Transverse colon (tissue), 4 donors: ENCODE measurements at regions of chr2 and their contacts with region 1.

Region 1: GRCh38 chr2:85538486-85539360 is at the start of gene MAT2A:
- DNase-seq: peak; percentile 92
- H3K4me3 ChIP-seq: peak within 1 kb of the TSS; percentile 56 to 94 (median 85)
- H3K27ac ChIP-seq: peak within 1 kb of the TSS; percentile 95 to 99 (median 98)
- H3K4me1 ChIP-seq: peaks cover 17 to 65% (median 40%) of the 10 kb centered on the region in 4 donors
- H3K27me3 ChIP-seq: no peaks in the 10 kb centered on the region
- CTCF ChIP-seq: peak; percentile 63 to 96 (median 76)
- EP300 ChIP-seq: no peak
- POLR2A ChIP-seq: peak; percentile 100
- total RNA-seq, gene MAT2A: 66.2 to 185 (median 142) TPM

Region 2: DNA sequence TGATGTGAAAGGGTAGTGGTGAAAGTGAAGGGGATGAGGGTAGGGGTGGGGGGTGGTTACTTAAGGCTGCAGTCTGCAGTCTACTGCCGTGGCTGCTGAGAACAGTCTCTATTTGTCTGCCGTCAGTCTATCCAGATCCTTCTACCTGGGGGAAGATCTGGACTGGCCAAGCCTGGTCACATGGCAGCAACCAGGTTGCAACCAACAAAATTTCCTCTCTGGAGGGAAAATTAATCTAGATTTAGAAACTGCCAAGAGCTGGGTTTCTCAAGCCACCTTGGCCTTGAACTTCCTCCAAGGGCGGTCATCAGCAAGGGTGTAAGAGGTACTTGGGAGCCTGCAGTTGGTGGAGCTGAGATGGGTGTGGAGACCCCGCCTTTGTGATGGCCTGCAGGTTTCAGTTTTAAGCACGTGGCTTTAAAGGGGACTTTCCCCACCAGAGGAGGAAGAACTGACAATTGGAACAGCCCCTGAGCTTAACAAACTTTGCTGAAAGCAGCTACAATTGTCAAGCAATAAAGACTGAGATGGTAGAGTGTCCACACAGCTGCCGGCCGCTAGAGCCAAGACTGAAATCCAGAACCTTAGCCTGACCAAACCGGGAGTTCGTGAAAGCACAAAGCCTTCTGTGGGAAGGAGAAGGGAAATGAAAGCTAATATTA is 599.2 kb before region 1 on chr2:
- in situ Hi-C with region 1: no loop called
- intact Hi-C with region 1: no loop called
- DNase-seq: peak; percentile 80
- H3K4me3 ChIP-seq: peak overlapping the region in 1 of 4 donors; percentile 27
- H3K27ac ChIP-seq: peak overlapping the region; percentile 61 to 79 (median 75)
- H3K4me1 ChIP-seq: peaks cover 6 to 34% (median 16%) of the 10 kb centered on the region in 4 donors
- H3K27me3 ChIP-seq: no peaks in the 10 kb centered on the region
- CTCF ChIP-seq: peak in 2 of 5 experiments; percentile 29 to 40
- EP300 ChIP-seq: no peak
- POLR2A ChIP-seq: no peak

Region 3: GRCh38 chr2:85221067-85221691 is 317.5 kb before region 1 on chr2:
- in situ Hi-C with region 1: no loop called
- intact Hi-C with region 1: no loop called
- DNase-seq: peak; percentile 11
- H3K4me3 ChIP-seq: no peak overlapping the region
- H3K27ac ChIP-seq: no peak overlapping the region
- H3K4me1 ChIP-seq: peaks cover 0 to 7% (median 0%) of the 10 kb centered on the region in 4 donors
- H3K27me3 ChIP-seq: no peaks in the 10 kb centered on the region
- CTCF ChIP-seq: no peak
- EP300 ChIP-seq: no peak
- POLR2A ChIP-seq: no peak

Region 4: GRCh38 chr2:85437488-85438284 is 101.0 kb before region 1 on chr2:
- in situ Hi-C with region 1: no loop called
- intact Hi-C with region 1: loop called (anchors 5 kb)
- DNase-seq: peak; percentile 88
- H3K4me3 ChIP-seq: peak overlapping the region; percentile 12 to 55 (median 36)
- H3K27ac ChIP-seq: peak overlapping the region; percentile 90 to 94 (median 94)
- H3K4me1 ChIP-seq: peaks cover 28 to 50% (median 41%) of the 10 kb centered on the region in 4 donors
- H3K27me3 ChIP-seq: no peaks in the 10 kb centered on the region
- CTCF ChIP-seq: no peak
- EP300 ChIP-seq: peak; percentile 83
- POLR2A ChIP-seq: peak; percentile 82

Region 5: DNA sequence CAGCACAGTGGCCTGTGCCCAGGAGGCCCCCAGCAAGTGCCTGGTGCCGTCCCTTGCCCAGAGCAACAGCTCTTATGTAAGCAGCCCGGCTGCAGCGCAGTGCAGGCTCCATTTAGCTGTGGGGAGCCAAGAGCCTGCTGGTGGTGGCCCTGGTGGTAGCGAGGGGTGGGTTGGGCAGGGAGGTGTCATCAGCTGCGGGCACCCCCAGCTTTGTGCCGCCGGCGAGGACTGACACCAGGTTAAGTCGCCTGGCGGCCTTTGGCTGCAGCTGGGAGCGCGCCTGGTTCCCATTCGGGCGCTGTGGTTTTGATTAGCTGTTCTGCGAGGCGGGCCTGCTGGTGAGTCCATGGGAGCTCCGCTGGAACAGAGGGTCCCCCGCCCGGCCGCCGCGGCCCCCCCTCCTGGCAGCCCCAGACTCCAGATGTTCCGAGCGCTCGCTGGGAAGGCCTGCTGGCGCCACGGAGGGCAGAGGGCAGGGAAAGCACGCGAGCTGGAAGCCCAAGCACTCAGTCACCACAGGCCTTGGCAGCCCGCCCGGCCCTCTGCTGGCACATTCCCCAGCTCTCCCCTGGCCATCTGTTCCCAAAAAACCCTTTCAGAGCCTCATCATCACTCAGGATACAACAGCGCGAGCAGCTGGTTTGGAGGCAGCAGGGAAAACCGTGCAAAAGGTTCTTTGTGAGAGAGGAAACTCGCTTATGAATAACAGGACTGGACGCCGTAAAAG is 233.5 kb after region 1 on chr2:
- in situ Hi-C with region 1: no loop called
- intact Hi-C with region 1: no loop called
- DNase-seq: peak; percentile 91
- H3K4me3 ChIP-seq: peak overlapping the region in 1 of 4 donors; percentile 6
- H3K27ac ChIP-seq: peak overlapping the region; percentile 82 to 93 (median 84)
- H3K4me1 ChIP-seq: peaks cover 59 to 69% (median 62%) of the 10 kb centered on the region in 4 donors
- H3K27me3 ChIP-seq: no peaks in the 10 kb centered on the region
- CTCF ChIP-seq: peak in 3 of 5 experiments; percentile 20 to 34 (median 23)
- EP300 ChIP-seq: peak; percentile 76
- POLR2A ChIP-seq: no peak